Activated T-helper 1 cell treated with anti-CD3 and anti-CD28 coated beads, Interleukin-12 subunit alpha, Interleukin-12 subunit beta, Interleukin-2, Interleukin-4 antibody, amounts not matched to agents 30 ng/mL and 10 ng/mL and 1 ng/mL, durations not matched to agents 14 hours and 24 hours and 36 hours (primary cell): ENCODE measurements at regions of chr16 and their contacts with region 1.

Region 1: GRCh38 chr16:69310653-69311532 is at the start of gene VPS4A:
- DNase-seq: peak; percentile 98
- H3K4me3 Mint-ChIP-seq: peak within 1 kb of the TSS; percentile 99
- H3K27ac Mint-ChIP-seq: peak within 1 kb of the TSS; percentile 96
- H3K4me1 Mint-ChIP-seq: peaks cover 23% of the 10 kb centered on the region
- H3K27me3 Mint-ChIP-seq: no peaks in the 10 kb centered on the region
- total RNA-seq, gene VPS4A: 37.9 and 42.4 TPM in 2 replicates

Region 2: DNA sequence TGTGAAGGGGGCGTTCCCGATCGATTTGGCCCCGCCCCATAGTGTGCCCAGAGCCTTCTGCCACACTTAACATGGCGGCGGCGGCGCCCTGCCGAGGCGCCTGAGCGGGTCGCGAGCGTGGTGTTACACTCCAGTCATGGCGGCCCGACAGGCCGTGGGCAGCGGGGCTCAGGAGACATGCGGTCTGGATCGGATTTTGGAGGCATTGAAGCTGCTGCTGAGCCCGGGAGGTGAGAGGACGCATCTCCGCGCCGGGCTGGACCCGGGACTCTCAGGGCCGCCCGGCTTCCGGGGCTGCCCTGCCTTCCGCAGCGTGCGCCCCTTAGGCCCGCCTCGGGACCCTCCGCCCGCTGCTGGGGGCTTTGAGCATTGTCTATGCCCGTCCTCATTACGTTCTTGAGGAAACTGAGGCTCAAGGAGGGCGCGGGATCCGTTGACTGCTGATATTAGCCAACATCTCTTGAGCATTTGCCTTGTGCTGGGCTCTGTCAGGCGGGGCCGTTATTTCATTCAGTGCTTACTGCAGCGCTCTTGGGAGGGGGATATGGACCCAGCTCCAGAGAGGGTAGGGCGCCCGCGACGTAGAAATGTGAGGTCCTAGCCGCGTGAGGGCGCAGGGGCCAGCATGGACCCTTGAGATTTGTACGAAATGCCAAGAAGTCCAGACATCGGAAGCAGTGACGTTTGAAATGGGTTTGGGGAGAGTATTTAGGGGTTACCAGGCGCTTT is 467.2 kb before region 1 on chr16 and contains the start of gene TANGO6:
- intact Hi-C with region 1: loop called (anchors 1 kb)
- DNase-seq: peak; percentile 87
- H3K4me3 Mint-ChIP-seq: peak within 1 kb of the TSS; percentile 94
- H3K27ac Mint-ChIP-seq: peak within 1 kb of the TSS; percentile 94
- H3K4me1 Mint-ChIP-seq: peaks cover 24% of the 10 kb centered on the region
- H3K27me3 Mint-ChIP-seq: no peaks in the 10 kb centered on the region
- total RNA-seq, gene TANGO6: 34.1 and 35.5 TPM in 2 replicates

Region 3: DNA sequence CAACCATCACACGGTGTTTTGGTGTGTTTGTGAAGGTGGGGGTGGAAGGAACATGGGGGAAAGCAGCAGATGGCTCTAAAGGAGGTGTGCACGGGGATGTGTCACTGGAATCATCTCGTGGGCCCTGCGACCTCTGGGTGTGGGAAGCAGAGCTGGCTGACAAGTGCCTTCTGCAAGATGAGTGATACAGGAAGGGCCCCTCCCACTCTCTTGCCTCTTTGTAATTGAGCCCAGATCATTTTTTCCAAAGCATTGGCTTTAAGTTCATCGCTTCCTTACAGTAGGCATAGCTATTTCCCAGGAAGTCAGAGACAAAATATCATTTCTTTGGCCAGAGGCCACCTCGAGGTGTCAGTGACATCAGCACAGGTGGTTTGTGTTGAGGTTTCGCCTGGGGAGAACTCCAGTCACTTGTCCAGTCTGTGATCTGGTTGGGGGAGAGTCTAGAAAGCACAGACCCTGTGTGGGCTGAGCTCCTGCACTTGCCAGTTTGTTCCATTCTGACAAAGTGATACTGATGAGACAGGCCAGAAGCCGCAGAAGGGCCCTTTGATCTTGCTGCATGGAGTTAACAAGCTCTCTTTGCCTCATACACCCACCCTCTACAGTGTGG is 144.6 kb before region 1 on chr16:
- intact Hi-C with region 1: loop called (anchors 1 kb)
- DNase-seq: peak; percentile 46
- H3K4me3 Mint-ChIP-seq: peak overlapping the region; percentile 69
- H3K27ac Mint-ChIP-seq: peak overlapping the region; percentile 89
- H3K4me1 Mint-ChIP-seq: peaks cover 49% of the 10 kb centered on the region
- H3K27me3 Mint-ChIP-seq: no peaks in the 10 kb centered on the region

Region 4: GRCh38 chr16:69217433-69217832 is 93.5 kb before region 1 on chr16:
- intact Hi-C with region 1: no loop called
- DNase-seq: no peak
- H3K4me3 Mint-ChIP-seq: no peak overlapping the region
- H3K27ac Mint-ChIP-seq: no peak overlapping the region
- H3K4me1 Mint-ChIP-seq: peaks cover 17% of the 10 kb centered on the region
- H3K27me3 Mint-ChIP-seq: no peaks in the 10 kb centered on the region

Region 5: DNA sequence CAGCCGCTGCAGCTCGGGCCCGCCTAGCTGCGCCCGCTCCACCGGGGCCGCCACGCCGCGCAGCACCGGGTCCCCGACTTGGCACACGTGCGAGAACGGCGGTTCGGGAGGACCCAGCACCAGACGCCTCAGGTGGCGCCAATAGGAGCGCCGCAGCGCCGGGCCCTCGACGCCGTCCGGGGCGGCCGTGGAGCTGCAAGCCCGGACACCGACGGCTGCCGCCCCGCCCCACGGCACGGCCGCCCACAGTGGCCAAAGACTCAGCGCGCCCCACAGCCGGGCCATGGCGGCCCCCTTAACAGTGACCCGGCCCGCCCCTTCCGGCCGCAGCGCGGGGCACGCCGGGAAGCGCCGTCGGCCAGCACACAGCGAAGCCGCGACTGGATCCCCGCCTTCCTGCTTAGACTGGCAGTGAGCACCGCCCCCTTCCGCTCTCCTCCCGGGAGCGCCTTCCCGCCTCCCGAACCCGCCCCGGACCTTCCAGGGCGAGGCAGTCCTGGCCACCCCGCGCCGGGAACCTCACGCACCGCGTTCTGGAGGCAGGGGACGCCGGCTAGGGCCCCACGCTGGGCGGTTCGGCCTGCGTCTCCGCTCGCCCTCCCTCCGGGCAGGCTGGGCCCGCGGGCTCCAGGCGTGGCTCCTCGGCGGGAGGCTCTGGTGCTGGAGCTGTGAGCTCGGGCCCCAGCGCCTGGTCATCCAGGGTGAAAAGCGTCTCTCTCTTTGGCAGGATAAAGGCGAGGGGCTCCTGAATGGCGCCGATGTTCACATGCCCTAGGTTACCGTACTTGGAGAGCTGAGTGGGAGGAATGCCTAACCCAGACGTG is 19.6 kb after region 1 on chr16 and contains the start of gene PDF:
- intact Hi-C with region 1: loop called (anchors 1 kb)
- DNase-seq: peak; percentile 86
- H3K4me3 Mint-ChIP-seq: peak within 1 kb of the TSS; percentile 84
- H3K27ac Mint-ChIP-seq: peak within 1 kb of the TSS; percentile 63
- H3K4me1 Mint-ChIP-seq: peaks cover 36% of the 10 kb centered on the region
- H3K27me3 Mint-ChIP-seq: no peaks in the 10 kb centered on the region
- total RNA-seq, gene PDF: 17.4 and 21.5 TPM in 2 replicates

Region 6: GRCh38 chr16:69386596-69386995 is 75.7 kb after region 1 on chr16:
- intact Hi-C with region 1: loop called (anchors 1 kb)
- DNase-seq: no peak
- H3K4me3 Mint-ChIP-seq: peak overlapping the region; percentile 92
- H3K27ac Mint-ChIP-seq: no peak overlapping the region
- H3K4me1 Mint-ChIP-seq: peaks cover 26% of the 10 kb centered on the region
- H3K27me3 Mint-ChIP-seq: no peaks in the 10 kb centered on the region

Region 7: DNA sequence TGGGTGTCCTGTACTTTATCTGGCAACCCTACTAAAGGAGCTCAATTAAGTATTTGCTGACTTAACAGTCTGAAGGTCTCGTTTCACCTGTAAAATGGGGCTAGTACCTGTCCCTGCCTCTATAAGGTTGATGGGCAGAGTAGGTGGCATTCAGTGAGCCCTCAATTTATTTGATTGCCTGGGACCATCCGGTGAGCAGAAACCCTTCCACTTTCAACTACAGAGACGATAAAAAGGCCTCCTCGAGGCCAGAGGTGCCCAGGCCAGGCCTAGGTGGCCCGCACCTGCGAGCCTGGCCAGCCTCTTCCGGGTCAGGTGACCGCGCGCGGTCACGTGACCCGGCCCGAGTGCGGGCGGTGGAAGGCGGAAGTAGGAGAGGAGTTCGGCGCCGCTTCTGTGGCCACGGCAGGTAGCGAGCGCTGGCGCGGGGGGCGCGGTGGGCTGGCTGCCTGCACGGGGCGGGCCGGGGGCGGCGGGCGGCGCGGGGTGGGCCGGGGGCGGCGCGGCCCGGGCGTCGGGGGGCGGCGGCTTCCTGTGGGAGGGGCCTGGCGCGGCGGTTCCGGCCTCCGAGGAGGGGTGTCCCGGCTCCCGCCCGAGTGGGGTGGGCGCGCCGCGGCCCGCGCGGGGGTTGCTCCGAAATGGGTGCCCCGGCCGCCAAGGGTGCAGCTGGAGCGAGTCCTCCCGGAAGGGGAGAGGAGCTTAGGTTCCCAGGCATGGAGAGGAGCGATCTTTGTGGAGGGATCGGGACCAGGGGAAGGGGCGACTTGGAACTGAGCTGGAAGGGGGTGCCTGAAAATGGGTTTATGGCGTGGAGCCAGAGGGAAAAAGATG is 451.3 kb after region 1 on chr16 and contains the start of gene WWP2:
- intact Hi-C with region 1: loop called (anchors 2 kb)
- DNase-seq: peak; percentile 63
- H3K4me3 Mint-ChIP-seq: peak within 1 kb of the TSS; percentile 95
- H3K27ac Mint-ChIP-seq: peak within 1 kb of the TSS; percentile 96
- H3K4me1 Mint-ChIP-seq: peaks cover 31% of the 10 kb centered on the region
- H3K27me3 Mint-ChIP-seq: peaks cover 2% of the 10 kb centered on the region
- total RNA-seq, gene WWP2: 53.8 and 58.3 TPM in 2 replicates